CD4-positive, alpha-beta memory T cell (primary cell): ENCODE measurements at regions of chr19 and their contacts with region 1.

Region 1: DNA sequence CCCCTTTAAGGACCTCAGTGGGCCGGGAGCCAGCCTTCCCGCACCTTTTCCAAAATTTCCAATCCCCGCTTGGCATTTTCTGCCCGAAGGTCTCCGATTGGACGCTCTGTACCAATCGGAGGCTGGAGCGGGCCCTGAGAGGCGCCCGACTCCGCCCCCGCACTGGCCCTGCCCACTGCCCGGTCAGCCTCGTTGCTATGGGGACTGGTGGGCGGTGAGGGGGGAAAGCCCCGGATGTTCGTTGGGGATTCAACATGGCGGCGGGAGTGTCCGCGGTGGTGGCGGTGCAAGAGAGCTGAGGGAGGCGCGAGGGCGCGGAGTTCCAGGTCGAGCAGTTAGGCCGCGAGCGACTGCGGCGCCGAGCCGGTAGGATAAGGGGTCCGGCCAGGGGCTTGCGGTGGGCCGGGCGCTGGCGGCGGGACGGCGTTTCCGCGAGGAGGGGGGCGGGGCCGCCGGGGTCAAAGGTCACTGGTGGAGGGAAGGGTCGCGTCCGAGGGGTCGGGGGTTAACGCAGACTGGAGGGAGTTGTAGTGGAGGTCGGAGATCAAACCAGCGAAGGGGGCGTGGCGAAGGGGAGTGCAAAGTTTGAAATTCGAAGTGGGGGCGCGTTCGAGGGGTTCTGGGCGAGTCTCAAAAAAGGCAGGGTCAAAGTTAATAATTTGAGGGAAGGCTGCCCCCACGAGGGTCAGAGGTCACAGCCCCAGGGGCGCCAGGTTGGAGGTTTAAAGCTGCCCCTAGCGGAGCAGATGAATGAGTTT is at the start of gene PAK4:
- DNase-seq: peak; percentile 94 to 96 (median 95)
- H3K4me3 ChIP-seq: peak within 1 kb of the TSS; percentile 73 to 82
- H3K4me3 Mint-ChIP-seq: peak within 1 kb of the TSS; percentile 95 to 99 (median 98)
- H3K27ac ChIP-seq: peak within 1 kb of the TSS; percentile 76
- H3K27ac Mint-ChIP-seq: peak within 1 kb of the TSS; percentile 95 to 100 (median 99)
- H3K4me1 ChIP-seq: peaks cover 26% of the 10 kb centered on the region
- H3K4me1 Mint-ChIP-seq: peaks cover 23 to 65% (median 42%) of the 10 kb centered on the region in 4 donors
- H3K27me3 ChIP-seq: no peaks in the 10 kb centered on the region
- H3K27me3 Mint-ChIP-seq: peaks cover 3% of the 10 kb centered on the region in 2 donors
- total RNA-seq, gene PAK4: 13.1 to 15.7 TPM

Region 2: GRCh38 chr19:39021063-39021462 is 104.7 kb before region 1 on chr19:
- CTCF ChIA-PET with region 1: no interaction called
- POLR2A ChIA-PET with region 1: no interaction called
- intact Hi-C with region 1: no loop called
- DNase-seq: no peak
- H3K4me3 ChIP-seq: no peak overlapping the region
- H3K4me3 Mint-ChIP-seq: no peak overlapping the region
- H3K27ac ChIP-seq: no peak overlapping the region
- H3K27ac Mint-ChIP-seq: no peak overlapping the region
- H3K4me1 ChIP-seq: no peaks in the 10 kb centered on the region
- H3K4me1 Mint-ChIP-seq: no peaks in the 10 kb centered on the region
- H3K27me3 ChIP-seq: no peaks in the 10 kb centered on the region
- H3K27me3 Mint-ChIP-seq: peaks cover 9 to 21% of the 10 kb centered on the region in 2 donors

Region 3: GRCh38 chr19:39110263-39110967 is 15.3 kb before region 1 on chr19:
- CTCF ChIA-PET with region 1: interaction called, 10 read pairs
- POLR2A ChIA-PET with region 1: no interaction called
- intact Hi-C with region 1: no loop called
- DNase-seq: peak; percentile 43 to 61 (median 61)
- H3K4me3 ChIP-seq: no peak overlapping the region
- H3K4me3 Mint-ChIP-seq: no peak overlapping the region
- H3K27ac ChIP-seq: no peak overlapping the region
- H3K27ac Mint-ChIP-seq: peak overlapping the region in 3 of 7 donors; percentile 2 to 80 (median 42)
- H3K4me1 ChIP-seq: no peaks in the 10 kb centered on the region
- H3K4me1 Mint-ChIP-seq: peaks cover 0 to 4% (median 3%) of the 10 kb centered on the region in 4 donors
- H3K27me3 ChIP-seq: no peaks in the 10 kb centered on the region
- H3K27me3 Mint-ChIP-seq: peaks cover 3% of the 10 kb centered on the region in 2 donors

Region 4: GRCh38 chr19:39138221-39139211 is 12.8 kb after region 1 on chr19:
- CTCF ChIA-PET with region 1: no interaction called
- POLR2A ChIA-PET with region 1: no interaction called
- intact Hi-C with region 1: no loop called
- DNase-seq: no peak
- H3K4me3 ChIP-seq: no peak overlapping the region
- H3K4me3 Mint-ChIP-seq: no peak overlapping the region
- H3K27ac ChIP-seq: no peak overlapping the region
- H3K27ac Mint-ChIP-seq: no peak overlapping the region
- H3K4me1 ChIP-seq: no peaks in the 10 kb centered on the region
- H3K4me1 Mint-ChIP-seq: peaks cover 5 to 39% (median 17%) of the 10 kb centered on the region in 4 donors
- H3K27me3 ChIP-seq: no peaks in the 10 kb centered on the region
- H3K27me3 Mint-ChIP-seq: no peaks in the 10 kb centered on the region

Region 5: DNA sequence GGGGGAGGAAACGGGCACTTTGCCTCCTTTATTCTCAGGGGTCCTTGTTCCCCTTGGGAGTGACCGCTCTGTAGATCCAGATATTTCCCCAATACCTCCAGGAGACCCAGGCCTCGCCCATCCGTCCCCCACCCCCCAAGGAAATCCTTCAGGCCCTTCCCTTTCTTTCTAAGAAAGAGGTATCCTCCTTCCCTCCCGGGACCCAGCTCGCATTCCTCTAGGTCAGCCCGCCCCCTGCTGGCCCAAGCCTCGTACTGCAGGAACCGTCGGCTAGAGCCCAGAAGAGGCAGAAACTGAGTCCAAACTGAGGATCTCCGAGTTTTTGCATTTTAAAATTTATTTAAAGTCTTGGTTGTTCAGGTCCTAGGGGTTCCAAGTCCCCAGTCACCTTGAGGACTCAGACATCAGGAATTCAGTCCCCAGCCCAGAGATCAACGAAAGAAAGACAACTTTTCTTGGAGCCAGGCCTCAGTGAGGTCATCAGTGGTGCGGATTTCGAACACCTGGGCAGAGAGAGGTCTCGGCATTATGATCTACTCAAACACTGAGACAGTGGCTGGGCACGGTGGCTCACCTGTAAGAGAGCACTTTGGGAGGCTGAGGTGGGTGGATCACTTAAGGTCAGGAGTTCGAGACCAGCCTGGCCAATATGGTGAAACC is 202.4 kb after region 1 on chr19:
- CTCF ChIA-PET with region 1: interaction called, 57 read pairs
- POLR2A ChIA-PET with region 1: interaction called, 3 read pairs
- intact Hi-C with region 1: loop called (anchors 1 kb)
- DNase-seq: peak; percentile 67 to 77 (median 73)
- H3K4me3 ChIP-seq: no peak overlapping the region
- H3K4me3 Mint-ChIP-seq: peak overlapping the region in 4 of 8 donors; percentile 32 to 78 (median 58)
- H3K27ac ChIP-seq: peak overlapping the region; percentile 18
- H3K27ac Mint-ChIP-seq: peak overlapping the region; percentile 73 to 92 (median 87)
- H3K4me1 ChIP-seq: peaks cover 64% of the 10 kb centered on the region
- H3K4me1 Mint-ChIP-seq: peaks cover 21 to 51% (median 34%) of the 10 kb centered on the region in 4 donors
- H3K27me3 ChIP-seq: no peaks in the 10 kb centered on the region
- H3K27me3 Mint-ChIP-seq: no peaks in the 10 kb centered on the region

Region 6: GRCh38 chr19:39390755-39391592 is 265.2 kb after region 1 on chr19 and contains the starts of genes MED29 and PAF1:
- CTCF ChIA-PET with region 1: interaction called, 3 read pairs
- POLR2A ChIA-PET with region 1: interaction called, 3 read pairs
- intact Hi-C with region 1: loop called (anchors 5 kb)
- DNase-seq: peak; percentile 96 to 99 (median 99)
- H3K4me3 ChIP-seq: peak within 1 kb of the TSS; percentile 71 to 93
- H3K4me3 Mint-ChIP-seq: peak within 1 kb of the TSS; percentile 90 to 99 (median 98)
- H3K27ac ChIP-seq: peak within 1 kb of the TSS; percentile 99
- H3K27ac Mint-ChIP-seq: peak within 1 kb of the TSS; percentile 93 to 100 (median 100)
- H3K4me1 ChIP-seq: peaks cover 26% of the 10 kb centered on the region
- H3K4me1 Mint-ChIP-seq: peaks cover 22 to 46% (median 33%) of the 10 kb centered on the region in 4 donors
- H3K27me3 ChIP-seq: no peaks in the 10 kb centered on the region
- H3K27me3 Mint-ChIP-seq: no peaks in the 10 kb centered on the region
- total RNA-seq, gene MED29: 43.1 to 51.3 TPM
- total RNA-seq, gene PAF1: 49.2 to 53.8 TPM

Region 7: DNA sequence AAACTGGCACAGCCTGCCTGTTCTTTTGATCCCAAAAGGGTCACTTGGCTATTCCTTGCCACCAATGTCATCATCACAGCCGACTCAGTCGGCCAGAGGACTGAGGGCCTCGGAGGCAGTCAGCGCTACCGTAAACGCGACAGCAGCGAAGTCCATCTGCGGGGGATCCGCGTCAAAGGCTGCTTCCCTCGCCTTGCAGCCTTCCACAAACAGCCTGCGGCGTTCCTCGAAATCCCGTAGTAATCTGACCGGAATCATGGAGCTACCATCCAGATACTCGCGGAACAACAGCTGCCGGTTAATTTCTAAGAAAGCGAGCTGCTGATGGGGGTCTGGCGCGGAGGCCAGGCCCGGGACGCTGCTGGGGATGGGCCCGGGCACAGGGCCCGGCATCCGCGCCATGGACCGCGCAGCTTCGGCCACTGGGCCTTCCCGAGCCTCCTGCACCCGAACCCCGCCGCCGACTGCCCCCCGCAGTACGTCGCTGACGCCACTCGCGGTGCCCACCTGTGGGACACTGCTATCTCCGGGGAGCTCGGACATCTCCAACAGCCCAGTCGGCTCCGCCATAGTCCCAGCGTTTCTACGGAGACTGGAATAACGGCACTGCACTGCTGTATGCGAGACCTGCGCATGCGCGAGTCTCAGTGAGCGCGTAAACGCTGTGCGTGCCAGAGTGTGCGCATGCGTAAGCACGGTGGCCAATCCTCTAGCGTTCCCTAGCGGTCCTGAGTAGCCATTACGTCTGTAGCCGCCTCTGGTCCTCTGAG is 406.7 kb after region 1 on chr19 and contains the start of gene EID2B:
- CTCF ChIA-PET with region 1: no interaction called
- POLR2A ChIA-PET with region 1: no interaction called
- intact Hi-C with region 1: loop called (anchors 5 kb)
- DNase-seq: peak; percentile 92 to 95 (median 94)
- H3K4me3 ChIP-seq: peak within 1 kb of the TSS; percentile 19 to 92
- H3K4me3 Mint-ChIP-seq: peak within 1 kb of the TSS; percentile 91 to 96 (median 94)
- H3K27ac ChIP-seq: peak within 1 kb of the TSS; percentile 83
- H3K27ac Mint-ChIP-seq: peak within 1 kb of the TSS; percentile 81 to 95 (median 92)
- H3K4me1 ChIP-seq: peaks cover 20% of the 10 kb centered on the region
- H3K4me1 Mint-ChIP-seq: peaks cover 14 to 43% (median 28%) of the 10 kb centered on the region in 4 donors
- H3K27me3 ChIP-seq: no peaks in the 10 kb centered on the region
- H3K27me3 Mint-ChIP-seq: no peaks in the 10 kb centered on the region
- total RNA-seq, gene EID2B: 7.7 to 8.8 TPM